CD8-positive, alpha-beta memory T cell (primary cell): ENCODE measurements at regions of chrX and their contacts with region 1.

Region 1: DNA sequence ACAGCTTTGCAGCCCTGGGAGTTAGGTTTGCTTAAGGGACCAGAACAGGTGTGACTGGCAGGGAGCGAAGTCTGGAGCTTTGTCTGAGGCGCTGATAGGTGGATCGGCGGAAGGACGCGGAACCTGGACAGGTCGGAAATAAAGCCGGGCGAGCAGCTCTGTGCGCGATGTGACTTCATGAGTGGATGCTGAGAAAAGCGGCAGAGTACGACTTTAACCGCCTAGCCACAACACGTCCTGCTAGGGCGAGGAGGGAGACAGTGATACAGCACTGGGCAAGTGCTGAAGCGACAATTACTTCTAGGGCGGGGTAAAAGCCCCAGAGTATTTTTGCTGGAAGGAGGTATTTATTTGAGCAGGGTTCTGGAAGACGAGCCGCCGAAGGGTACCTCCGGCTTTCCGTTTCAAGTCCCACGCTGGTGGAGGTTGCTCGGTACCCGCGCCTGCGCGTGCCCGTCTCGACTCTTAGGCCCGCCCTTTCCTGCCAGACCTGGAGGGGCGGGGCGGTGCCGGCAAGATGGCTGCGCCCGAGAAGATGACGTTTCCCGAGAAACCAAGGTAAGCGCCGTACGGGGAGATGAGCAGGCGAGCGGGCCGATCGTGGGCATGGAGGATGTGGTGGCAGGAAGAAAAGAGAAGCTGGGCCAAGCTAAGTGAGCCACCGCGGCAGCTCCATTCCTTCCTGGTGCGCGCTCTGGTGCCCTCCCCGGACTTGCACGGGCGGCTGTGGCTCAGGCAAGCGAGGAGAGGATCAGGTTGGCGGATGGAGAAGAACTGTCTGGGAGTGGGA is at the start of gene ZRSR2:
- DNase-seq: peak; percentile 78 to 94 (median 91)
- H3K4me3 ChIP-seq: peak within 1 kb of the TSS; percentile 76
- H3K4me3 Mint-ChIP-seq: no peak within 1 kb of the TSS
- H3K27ac ChIP-seq: peak within 1 kb of the TSS; percentile 94
- H3K27ac Mint-ChIP-seq: no peak within 1 kb of the TSS
- H3K4me1 ChIP-seq: peaks cover 10% of the 10 kb centered on the region
- H3K4me1 Mint-ChIP-seq: peaks cover 23 to 32% (median 27%) of the 10 kb centered on the region in 3 donors
- H3K27me3 ChIP-seq: no peaks in the 10 kb centered on the region
- H3K27me3 Mint-ChIP-seq: no peaks in the 10 kb centered on the region
- total RNA-seq, gene ZRSR2: 12.0 to 12.4 TPM

Region 2: DNA sequence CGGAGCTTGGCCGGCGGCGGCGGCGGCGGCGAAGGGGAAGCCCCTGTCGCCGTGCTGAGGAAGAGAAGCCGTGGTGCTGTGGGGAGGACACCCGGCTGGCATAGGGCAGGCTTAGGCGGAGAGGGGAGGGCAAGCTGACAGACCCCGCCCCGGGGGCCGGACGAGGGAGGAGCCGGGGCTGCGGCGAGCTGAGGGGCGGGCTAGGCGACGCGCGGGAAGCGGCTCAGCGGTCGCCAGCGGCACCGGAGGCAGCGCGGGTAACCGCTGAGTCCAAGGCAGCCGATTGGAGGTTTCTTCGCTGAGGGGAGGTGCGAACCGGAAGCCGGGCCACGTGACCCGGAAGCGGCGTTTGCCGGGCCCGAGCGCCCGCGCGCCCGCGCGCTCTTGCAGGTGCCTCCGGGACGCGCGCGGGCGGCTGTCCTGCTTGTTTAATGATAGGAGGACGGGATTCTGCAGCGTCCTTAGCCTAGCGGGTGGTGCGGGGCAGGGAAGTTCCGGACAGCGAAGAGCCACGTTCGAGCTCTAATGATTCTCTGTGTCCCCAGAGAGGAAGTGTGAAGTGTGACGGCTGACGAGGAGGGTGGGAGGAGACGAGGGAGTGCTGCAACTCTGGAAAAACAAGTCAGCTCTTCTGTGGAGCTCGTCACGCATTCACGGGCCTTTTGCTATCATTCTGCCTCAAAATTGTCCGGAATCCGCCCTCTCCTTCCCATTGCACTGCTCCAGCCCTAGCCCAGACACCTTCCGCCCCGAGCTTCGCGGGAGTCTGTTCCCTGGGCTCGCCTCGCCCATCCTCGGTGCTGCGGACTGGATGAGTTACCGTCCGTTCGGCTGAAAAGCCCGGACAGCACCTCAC is 64.8 kb after region 1 on chrX and contains the start of gene AP1S2:
- CTCF ChIA-PET with region 1: interaction called, 3 read pairs
- POLR2A ChIA-PET with region 1: interaction called, 12 read pairs
- DNase-seq: peak; percentile 86 to 99 (median 95)
- H3K4me3 ChIP-seq: peak within 1 kb of the TSS; percentile 82
- H3K4me3 Mint-ChIP-seq: peak within 1 kb of the TSS; percentile 92 to 98 (median 98)
- H3K27ac ChIP-seq: peak within 1 kb of the TSS; percentile 84
- H3K27ac Mint-ChIP-seq: peak within 1 kb of the TSS; percentile 90 to 99 (median 98)
- H3K4me1 ChIP-seq: peaks cover 6% of the 10 kb centered on the region
- H3K4me1 Mint-ChIP-seq: peaks cover 25 to 32% (median 31%) of the 10 kb centered on the region in 3 donors
- H3K27me3 ChIP-seq: no peaks in the 10 kb centered on the region
- H3K27me3 Mint-ChIP-seq: peaks cover 0 to 7% of the 10 kb centered on the region in 2 donors
- total RNA-seq, gene AP1S2: 31.7 to 33.8 TPM

Region 3: DNA sequence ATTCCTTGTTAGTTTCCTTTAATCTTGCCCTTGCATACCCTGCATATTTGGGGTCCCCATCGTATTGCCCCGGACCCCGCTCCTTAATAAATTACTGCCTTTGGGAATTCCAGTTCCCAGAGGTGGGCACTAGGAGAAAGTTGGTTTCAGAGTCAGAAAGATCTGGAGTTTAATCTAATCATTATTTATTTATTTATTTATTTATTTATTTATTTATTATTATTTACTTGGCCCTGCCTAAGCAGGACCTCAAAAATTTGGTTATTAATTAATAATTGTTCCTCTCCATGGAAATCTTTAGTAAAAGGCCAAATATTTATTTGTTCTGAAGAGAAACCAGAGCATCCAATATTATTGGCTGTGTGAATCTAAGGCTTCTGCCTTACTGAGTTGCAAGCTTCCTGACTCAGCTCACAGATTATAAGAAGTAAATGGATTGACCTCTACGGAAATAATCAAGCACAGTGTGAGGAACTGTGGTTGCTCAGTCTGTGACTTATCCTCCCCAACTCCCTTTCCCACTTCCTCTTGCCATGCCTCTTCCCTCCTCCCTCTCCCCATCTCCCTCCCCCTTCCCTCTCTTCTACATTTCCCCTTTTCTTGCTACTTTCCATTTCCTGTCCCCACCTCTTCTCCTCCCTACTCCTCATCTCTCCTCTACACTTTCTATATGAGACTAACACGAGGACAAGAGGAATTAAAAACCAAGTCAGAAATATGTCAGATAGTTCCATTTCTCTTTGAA is 126.0 kb after region 1 on chrX:
- CTCF ChIA-PET with region 1: no interaction called
- POLR2A ChIA-PET with region 1: no interaction called
- DNase-seq: no peak
- H3K4me3 ChIP-seq: no peak overlapping the region
- H3K4me3 Mint-ChIP-seq: no peak overlapping the region
- H3K27ac ChIP-seq: no peak overlapping the region
- H3K27ac Mint-ChIP-seq: peak overlapping the region in 1 of 8 donors; percentile 35
- H3K4me1 ChIP-seq: no peaks in the 10 kb centered on the region
- H3K4me1 Mint-ChIP-seq: peaks cover 0 to 3% (median 0%) of the 10 kb centered on the region in 3 donors
- H3K27me3 ChIP-seq: no peaks in the 10 kb centered on the region
- H3K27me3 Mint-ChIP-seq: peaks cover 6 to 17% of the 10 kb centered on the region in 2 donors